ENCODE measurements at regions of chr2 and their contacts with region 1.

Region 1: GRCh38 chr2:72745679-72746368 is 80.0 kb downstream of the EXOC6B start:
- DNase-seq: peak; percentile 17 to 76 (median 32)
- ATAC-seq: 0 out of 3 replicates have a peak, but pooled peaks have one; percentile 56
- H3K4me3 ChIP-seq: no peak overlapping the region
- H3K27ac ChIP-seq: no peak overlapping the region
- H3K4me1 ChIP-seq: no peaks in the 10 kb centered on the region
- H3K27me3 ChIP-seq: no peaks in the 10 kb centered on the region
- CTCF ChIP-seq: peak; percentile 38 to 81 (median 54); a peak in 5 of 6 replicates
- EP300 ChIP-seq: no peak
- POLR2A ChIP-seq: no peak
- RAD21 ChIP-seq: peak; percentile 84 to 92

Region 2: GRCh38 chr2:71813807-71814470 is 931.9 kb before region 1 on chr2:
- CTCF ChIA-PET with region 1: no interaction called
- POLR2A ChIA-PET with region 1: no interaction called
- in situ Hi-C with region 1: loop called (anchors 10 kb)
- intact Hi-C with region 1: no loop called
- DNase-seq: no peak
- ATAC-seq: no peak
- H3K4me3 ChIP-seq: no peak overlapping the region
- H3K27ac ChIP-seq: no peak overlapping the region
- H3K4me1 ChIP-seq: no peaks in the 10 kb centered on the region
- H3K27me3 ChIP-seq: no peaks in the 10 kb centered on the region; a peak in 1 of 5 replicates
- CTCF ChIP-seq: no peak
- EP300 ChIP-seq: no peak
- POLR2A ChIP-seq: no peak
- RAD21 ChIP-seq: no peak

Region 3: GRCh38 chr2:72619626-72620025 is 126.2 kb before region 1 on chr2:
- CTCF ChIA-PET with region 1: no interaction called
- POLR2A ChIA-PET with region 1: no interaction called
- in situ Hi-C with region 1: no loop called
- intact Hi-C with region 1: loop called (anchors 10 kb)
- DNase-seq: no peak
- ATAC-seq: no peak
- H3K4me3 ChIP-seq: no peak overlapping the region
- H3K27ac ChIP-seq: no peak overlapping the region
- H3K4me1 ChIP-seq: no peaks in the 10 kb centered on the region
- H3K27me3 ChIP-seq: peaks cover 0 to 5% of the 10 kb centered on the region in 2 experiments; a peak in 2 of 5 replicates
- CTCF ChIP-seq: no peak
- EP300 ChIP-seq: no peak
- POLR2A ChIP-seq: no peak
- RAD21 ChIP-seq: no peak

Region 4: GRCh38 chr2:72722492-72723070 is 23.2 kb before region 1 on chr2:
- CTCF ChIA-PET with region 1: no interaction called
- POLR2A ChIA-PET with region 1: no interaction called
- in situ Hi-C with region 1: no loop called
- intact Hi-C with region 1: no loop called
- DNase-seq: no peak
- ATAC-seq: no peak
- H3K4me3 ChIP-seq: no peak overlapping the region
- H3K27ac ChIP-seq: no peak overlapping the region
- H3K4me1 ChIP-seq: no peaks in the 10 kb centered on the region
- H3K27me3 ChIP-seq: no peaks in the 10 kb centered on the region; a peak in 1 of 5 replicates
- CTCF ChIP-seq: no peak
- EP300 ChIP-seq: no peak
- POLR2A ChIP-seq: no peak
- RAD21 ChIP-seq: no peak

Region 5: DNA sequence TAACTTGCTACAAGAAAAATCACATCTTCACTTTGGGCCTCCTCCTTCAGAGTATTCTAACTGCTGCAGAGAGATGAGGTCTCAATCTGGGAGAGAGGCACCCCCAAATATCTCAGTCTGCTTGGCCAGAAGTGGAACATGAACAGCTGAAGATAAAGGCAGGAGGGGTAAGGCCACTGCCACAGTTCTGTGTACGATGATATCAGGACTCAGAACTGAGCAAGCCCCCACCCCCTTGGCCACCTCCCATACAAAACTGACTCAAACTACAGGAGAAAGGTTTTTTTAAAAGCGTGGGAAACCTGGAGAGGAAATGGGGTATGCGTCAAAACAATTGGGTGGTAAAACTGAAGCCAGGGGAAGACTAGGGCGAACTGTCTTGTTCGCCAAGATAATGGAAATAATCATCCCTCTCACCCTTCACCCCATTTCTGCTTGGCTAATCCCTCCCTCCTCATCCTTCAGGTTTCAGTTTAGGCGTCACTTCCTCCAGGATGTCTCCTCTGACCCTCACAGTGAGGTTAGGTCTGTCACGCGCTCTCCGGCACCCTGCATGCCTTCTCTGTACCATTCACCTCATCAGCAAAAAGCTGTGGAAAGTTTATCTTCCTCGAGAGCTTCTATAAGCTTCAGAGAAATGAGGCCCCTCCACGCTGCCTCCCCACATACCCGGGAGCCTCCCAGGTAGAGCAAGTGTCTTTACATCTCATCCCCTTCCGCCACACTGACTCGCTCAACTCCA is 261.3 kb after region 1 on chr2:
- CTCF ChIA-PET with region 1: no interaction called
- POLR2A ChIA-PET with region 1: no interaction called
- in situ Hi-C with region 1: no loop called
- intact Hi-C with region 1: no loop called
- DNase-seq: peak in 1 of 4 experiments; percentile 29
- ATAC-seq: peak; percentile 64
- H3K4me3 ChIP-seq: no peak overlapping the region
- H3K27ac ChIP-seq: peak overlapping the region; percentile 20; the same call in 1 of the 3 replicates
- H3K4me1 ChIP-seq: peaks cover 0 to 12% of the 10 kb centered on the region in 2 experiments; a peak in 3 of 5 replicates
- H3K27me3 ChIP-seq: no peaks in the 10 kb centered on the region
- CTCF ChIP-seq: no peak
- EP300 ChIP-seq: no peak
- POLR2A ChIP-seq: no peak
- RAD21 ChIP-seq: no peak

Measured in K562 (cell line).